HEK293T (cell line): ENCODE measurements at regions of chr12 and their contacts with region 1.

Region 1: GRCh38 chr12:95473884-95474659 is at the start of gene METAP2:
- DNase-seq: peak; percentile 95

Region 2: DNA sequence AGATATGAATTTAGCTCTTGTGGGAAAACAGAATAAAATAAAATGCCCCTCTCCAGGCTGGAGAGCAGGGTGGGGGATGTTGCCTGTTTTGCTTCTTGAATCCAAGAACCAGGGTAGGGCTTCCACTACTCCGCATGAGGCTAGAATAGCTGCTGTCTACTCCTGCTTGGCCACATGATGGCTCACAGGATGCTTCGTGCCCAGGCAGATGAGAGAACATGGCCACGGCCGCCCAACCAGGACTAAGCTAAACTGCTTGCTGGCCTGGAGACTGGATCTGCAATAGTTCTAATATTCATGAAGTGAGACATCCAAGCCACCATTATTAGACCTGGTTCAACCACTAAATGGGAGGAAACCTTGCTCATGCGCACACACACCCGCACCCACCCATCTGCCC is 122.3 kb before region 1 on chr12:
- CTCF ChIA-PET with region 1: no interaction called
- POLR2A ChIA-PET with region 1: interaction called, 10 read pairs
- DNase-seq: no peak

Region 3: GRCh38 chr12:95460896-95461661 is 13.0 kb before region 1 on chr12:
- CTCF ChIA-PET with region 1: no interaction called
- POLR2A ChIA-PET with region 1: interaction called, 10 read pairs
- DNase-seq: no peak

Region 4: GRCh38 chr12:95516757-95517156 is 42.7 kb after region 1 on chr12:
- CTCF ChIA-PET with region 1: no interaction called
- POLR2A ChIA-PET with region 1: interaction called, 12 read pairs
- DNase-seq: no peak